GM12878 (cell line): ENCODE measurements at regions of chr1 and their contacts with region 1.

Region 1: DNA sequence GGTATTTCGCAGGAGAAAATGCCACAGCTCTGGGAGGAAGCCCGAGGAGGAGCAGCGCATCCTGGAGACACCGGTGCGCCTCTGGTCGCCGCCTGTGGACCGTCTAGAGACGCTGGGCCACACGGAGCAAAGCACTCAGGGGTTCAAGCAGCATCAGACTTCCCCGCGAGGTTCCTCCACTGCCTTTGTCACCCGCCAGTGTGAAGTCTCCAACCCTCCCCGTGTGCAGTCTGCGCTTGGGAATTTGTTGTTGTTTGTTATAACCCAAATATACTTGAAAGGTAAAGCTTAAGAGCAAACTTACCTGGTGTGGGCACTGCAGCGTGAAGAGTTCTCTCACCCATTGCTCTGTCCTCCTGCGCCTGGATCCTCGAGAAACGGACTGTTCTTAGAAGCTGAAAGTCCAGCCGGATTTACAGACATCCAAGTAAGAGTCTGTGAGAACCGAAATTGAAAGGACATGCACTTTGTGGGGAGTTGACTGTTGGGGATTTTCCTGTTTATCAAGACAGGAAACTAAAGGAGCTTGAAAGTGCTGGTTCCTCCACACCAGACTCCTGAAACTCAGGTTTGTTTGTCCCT is at the start of gene GBP4:
- DNase-seq: peak; percentile 69
- ATAC-seq: peak; percentile 59
- H3K4me3 ChIP-seq: peak within 1 kb of the TSS; percentile 66
- H3K27ac ChIP-seq: peak within 1 kb of the TSS; percentile 73
- H3K4me1 ChIP-seq: peaks cover 13% of the 10 kb centered on the region
- H3K27me3 ChIP-seq: no peaks in the 10 kb centered on the region
- CTCF ChIP-seq: 0 out of 6 replicates have a peak, but pooled peaks of 1 of the 3 experiments have one; percentile 8
- EP300 ChIP-seq: peak; percentile 57 to 61; a peak in 2 of 4 replicates
- POLR2A ChIP-seq: no peak
- RAD21 ChIP-seq: no peak
- polyA plus RNA-seq, gene GBP4: 2.4 to 2.5 TPM

Region 2: DNA sequence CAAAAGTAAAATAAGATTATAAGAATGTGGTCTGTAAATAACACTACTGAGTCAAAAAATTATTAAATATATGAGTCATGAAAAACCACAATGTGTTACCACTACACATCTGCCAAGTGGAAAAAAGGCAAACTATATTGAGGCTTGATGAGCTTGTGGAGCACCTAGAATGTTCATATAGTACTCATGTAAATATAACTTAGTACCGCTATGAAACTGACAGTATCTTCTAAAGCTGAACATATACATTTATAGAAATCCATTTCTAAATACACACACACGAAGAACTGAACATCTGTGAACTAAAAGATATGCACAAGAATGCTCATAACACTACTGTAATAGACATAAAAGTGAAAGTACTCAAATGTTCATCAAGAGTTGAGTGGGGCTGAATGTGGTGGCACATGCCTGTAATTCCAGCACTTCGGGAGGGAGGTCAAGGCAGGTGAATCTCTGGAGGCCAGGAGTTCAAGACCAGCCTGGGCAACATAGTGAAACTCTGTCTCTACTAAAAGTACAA is 157.4 kb before region 1 on chr1:
- CTCF ChIA-PET with region 1: no interaction called
- POLR2A ChIA-PET with region 1: interaction called, 3 read pairs
- RAD21 ChIA-PET with region 1: no interaction called
- SMC1A ChIA-PET with region 1: interaction called, 3 read pairs
- in situ Hi-C with region 1: no loop called
- intact Hi-C with region 1: loop called (anchors 5 kb)
- DNase-seq: peak; percentile 70
- ATAC-seq: peak; percentile 97
- H3K4me3 ChIP-seq: no peak overlapping the region
- H3K27ac ChIP-seq: peak overlapping the region; percentile 46; the same call in 1 of the 2 replicates
- H3K4me1 ChIP-seq: peaks cover 14% of the 10 kb centered on the region
- H3K27me3 ChIP-seq: no peaks in the 10 kb centered on the region
- CTCF ChIP-seq: no peak
- EP300 ChIP-seq: peak; percentile 76 to 79; a peak in 3 of 4 replicates
- POLR2A ChIP-seq: no peak
- RAD21 ChIP-seq: no peak

Region 3: DNA sequence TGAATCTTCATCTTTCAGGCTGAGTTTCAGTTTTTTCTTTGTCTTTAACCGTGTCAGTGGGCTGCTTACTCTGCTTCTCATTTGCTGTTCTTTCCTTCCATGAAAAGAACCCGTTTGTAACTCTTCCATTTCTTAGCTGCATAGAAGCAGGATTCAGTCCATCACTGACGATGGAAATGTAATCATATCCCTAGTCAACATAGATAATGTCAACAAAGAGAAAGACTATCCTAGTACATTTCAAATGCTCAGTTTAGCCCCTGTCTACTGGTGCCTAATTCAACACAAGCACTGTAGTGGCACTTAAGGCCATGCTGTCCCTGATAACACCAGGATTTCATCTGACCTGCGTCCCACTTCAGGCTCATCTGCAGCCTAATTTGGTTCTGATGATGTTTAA is 133.9 kb before region 1 on chr1:
- CTCF ChIA-PET with region 1: no interaction called
- POLR2A ChIA-PET with region 1: no interaction called
- RAD21 ChIA-PET with region 1: interaction called, 3 read pairs
- SMC1A ChIA-PET with region 1: interaction called, 5 read pairs
- in situ Hi-C with region 1: no loop called
- intact Hi-C with region 1: loop called (anchors 5 kb)
- DNase-seq: no peak
- ATAC-seq: peak; percentile 73
- H3K4me3 ChIP-seq: peak overlapping the region; percentile 80
- H3K27ac ChIP-seq: peak overlapping the region; percentile 94
- H3K4me1 ChIP-seq: no peaks in the 10 kb centered on the region
- H3K27me3 ChIP-seq: no peaks in the 10 kb centered on the region
- CTCF ChIP-seq: no peak
- EP300 ChIP-seq: no peak
- POLR2A ChIP-seq: no peak
- RAD21 ChIP-seq: no peak

Region 4: DNA sequence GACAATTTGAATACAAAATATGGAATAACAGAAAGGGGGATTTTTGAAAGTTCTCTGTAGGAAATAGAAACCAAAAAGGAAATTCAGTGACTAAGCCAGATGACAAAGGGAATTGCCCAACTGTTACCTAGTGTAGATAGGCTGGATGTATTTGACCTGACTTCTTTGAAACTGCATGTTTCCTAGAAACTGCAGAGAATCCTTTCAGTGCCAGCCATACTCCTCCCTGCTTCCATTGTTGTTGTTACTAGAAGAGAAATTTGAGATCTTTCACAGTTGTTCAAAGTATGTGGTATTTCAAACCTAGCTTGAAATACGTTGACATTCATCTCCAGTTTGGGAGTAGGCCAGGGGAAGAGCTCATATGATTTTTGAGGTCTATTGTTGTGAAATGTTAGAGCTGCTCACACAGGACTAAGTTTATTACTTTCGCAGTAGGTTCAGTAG is 75.9 kb after region 1 on chr1:
- CTCF ChIA-PET with region 1: interaction called, 3 read pairs
- POLR2A ChIA-PET with region 1: interaction called, 4 read pairs
- RAD21 ChIA-PET with region 1: no interaction called
- SMC1A ChIA-PET with region 1: interaction called, 6 read pairs
- in situ Hi-C with region 1: no loop called
- intact Hi-C with region 1: loop called (anchors 5 kb)
- DNase-seq: no peak
- ATAC-seq: 0 out of 3 replicates have a peak, but pooled peaks have one; percentile 26
- H3K4me3 ChIP-seq: no peak overlapping the region
- H3K27ac ChIP-seq: no peak overlapping the region
- H3K4me1 ChIP-seq: no peaks in the 10 kb centered on the region
- H3K27me3 ChIP-seq: no peaks in the 10 kb centered on the region
- CTCF ChIP-seq: no peak
- EP300 ChIP-seq: no peak
- POLR2A ChIP-seq: no peak
- RAD21 ChIP-seq: no peak

Region 5: DNA sequence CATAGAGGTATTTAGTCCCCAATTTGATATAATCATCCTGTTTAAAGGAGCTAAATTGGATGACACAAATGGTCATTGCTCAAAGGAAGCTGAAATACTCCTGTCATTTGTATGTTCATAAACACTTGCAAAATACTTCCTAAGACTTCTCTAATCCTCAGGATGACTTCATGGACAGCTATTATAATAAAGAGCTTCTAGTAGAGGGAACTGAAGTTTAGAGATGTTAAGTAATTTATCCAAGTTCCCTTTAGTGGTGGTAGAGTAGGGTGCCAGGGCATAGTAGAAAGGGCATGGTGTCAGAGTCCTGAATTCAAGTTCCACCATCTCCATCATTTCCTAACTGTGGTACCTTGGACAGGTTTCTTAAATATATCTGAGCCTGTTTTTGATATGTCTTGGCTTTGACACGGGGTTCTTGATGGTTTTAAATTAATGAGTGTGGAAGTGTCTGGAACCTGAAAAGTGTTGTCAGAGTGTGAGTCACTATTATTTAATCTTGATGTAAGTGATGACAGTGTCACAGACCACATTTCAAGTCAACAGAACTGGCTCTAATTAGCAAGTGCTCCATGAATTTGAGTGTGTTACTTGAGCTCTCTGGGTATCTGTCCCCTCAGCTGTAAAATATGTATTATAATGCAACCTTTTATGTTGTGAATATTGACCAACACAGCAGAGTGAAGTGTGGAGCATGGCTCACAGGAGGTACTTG is 153.2 kb after region 1 on chr1:
- CTCF ChIA-PET with region 1: interaction called, 5 read pairs
- POLR2A ChIA-PET with region 1: no interaction called
- RAD21 ChIA-PET with region 1: interaction called, 4 read pairs
- SMC1A ChIA-PET with region 1: interaction called, 12 read pairs
- in situ Hi-C with region 1: no loop called
- intact Hi-C with region 1: loop called (anchors 2 kb)
- DNase-seq: no peak
- ATAC-seq: no peak
- H3K4me3 ChIP-seq: no peak overlapping the region
- H3K27ac ChIP-seq: no peak overlapping the region
- H3K4me1 ChIP-seq: no peaks in the 10 kb centered on the region
- H3K27me3 ChIP-seq: peaks cover 0 to 3% of the 10 kb centered on the region in 2 experiments; a peak in 2 of 4 replicates
- CTCF ChIP-seq: no peak
- EP300 ChIP-seq: no peak
- POLR2A ChIP-seq: no peak
- RAD21 ChIP-seq: no peak